ENCODE measurements at regions of chr6 and their contacts with region 1.

Region 1: DNA sequence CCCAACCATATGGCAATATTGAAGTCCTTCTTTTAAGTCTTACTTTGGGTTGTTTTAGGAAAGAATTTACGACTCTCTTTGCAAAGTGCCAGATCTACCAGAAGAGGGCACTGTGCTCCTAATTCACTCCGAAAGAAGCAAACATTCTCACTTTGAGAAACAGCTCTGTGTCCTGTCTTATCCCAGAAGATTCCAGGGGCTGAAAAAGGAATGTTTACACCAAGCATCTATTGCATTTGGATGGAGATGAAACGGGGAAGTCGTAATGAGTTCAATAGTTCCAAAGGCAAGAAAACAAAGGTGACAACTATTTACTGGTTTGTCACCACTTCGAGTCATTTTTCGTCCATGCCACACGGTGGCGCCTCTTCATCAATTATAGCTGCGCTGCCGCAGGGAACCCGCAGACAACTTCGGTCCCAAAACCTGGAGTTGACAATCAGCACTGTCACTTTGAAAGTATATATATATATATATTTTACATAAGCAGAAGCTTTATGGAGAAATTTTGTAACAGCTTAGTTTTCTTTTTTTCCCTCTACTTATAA is 121.6 kb downstream of the MOXD1 start:
- DNase-seq: peak; percentile 65
- ATAC-seq: peak; percentile 93
- H3K4me3 Mint-ChIP-seq: peak overlapping the region; percentile 86
- H3K27ac Mint-ChIP-seq: peak overlapping the region; percentile 19
- H3K4me1 Mint-ChIP-seq: no peaks in the 10 kb centered on the region
- H3K27me3 Mint-ChIP-seq: peaks cover 7% of the 10 kb centered on the region
- CTCF ChIP-seq: peak; percentile 100

Region 2: DNA sequence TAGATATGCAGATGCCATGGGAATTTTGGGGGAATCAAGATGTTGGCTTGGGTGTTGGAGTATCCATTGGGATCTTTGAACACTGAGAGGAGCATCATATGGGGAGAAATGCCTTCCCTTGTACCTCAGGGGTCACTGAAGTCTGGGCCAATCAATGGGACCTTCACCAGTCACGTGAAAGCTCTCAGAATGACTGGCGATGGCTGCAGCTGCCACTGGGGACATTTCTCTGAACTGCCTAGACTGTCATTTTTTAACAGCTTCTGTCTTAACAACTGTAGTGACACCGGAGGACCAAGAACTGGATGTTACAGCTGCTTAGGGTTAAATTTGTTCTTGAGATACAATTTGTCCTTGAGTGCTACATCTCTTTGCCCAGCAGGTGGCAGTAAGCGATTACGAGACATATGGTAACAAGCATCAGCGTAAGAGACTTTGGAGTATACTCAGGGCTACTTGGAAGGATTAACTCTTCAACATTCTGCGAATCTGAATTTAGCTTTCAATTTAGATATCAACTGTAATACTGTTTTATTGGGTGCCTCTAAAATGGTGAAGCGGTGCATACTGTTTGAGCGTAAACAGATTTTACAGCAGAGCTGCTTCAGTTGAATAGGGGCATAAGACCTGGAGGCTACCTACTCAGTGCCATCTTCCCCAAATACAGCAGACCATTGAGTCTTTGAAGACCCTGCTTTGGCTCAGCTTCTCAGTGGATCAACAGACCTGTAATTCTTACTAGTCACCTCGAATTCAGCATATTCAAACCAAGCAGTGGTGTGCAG is 364.5 kb before region 1 on chr6:
- CTCF ChIA-PET with region 1: interaction called, 11 read pairs
- POLR2A ChIA-PET with region 1: no interaction called
- intact Hi-C with region 1: loop called (anchors 5 kb)
- DNase-seq: no peak
- ATAC-seq: peak; percentile 75
- H3K4me3 Mint-ChIP-seq: no peak overlapping the region
- H3K27ac Mint-ChIP-seq: no peak overlapping the region
- H3K4me1 Mint-ChIP-seq: peaks cover 26% of the 10 kb centered on the region
- H3K27me3 Mint-ChIP-seq: peaks cover 30% of the 10 kb centered on the region
- CTCF ChIP-seq: peak; percentile 29

Region 3: DNA sequence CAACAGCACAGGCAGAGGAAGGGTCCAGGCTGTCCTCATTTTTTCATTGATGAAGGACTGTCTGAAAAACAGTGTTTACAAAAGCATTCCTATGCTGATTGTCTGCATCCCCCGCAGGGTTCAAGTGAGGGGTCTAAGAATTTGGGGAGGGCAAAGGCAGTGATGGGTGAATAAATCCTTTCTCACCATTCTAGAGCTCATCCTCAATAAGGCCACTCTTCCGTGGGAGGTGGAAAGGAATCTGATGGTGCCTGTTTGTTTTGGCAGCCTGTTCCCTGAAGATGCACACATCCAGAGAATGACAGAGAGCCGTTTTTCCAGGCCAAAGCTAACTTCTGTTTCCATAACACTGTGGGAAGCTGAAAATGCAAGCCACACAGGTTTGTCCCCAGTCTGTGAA is 42.9 kb before region 1 on chr6:
- CTCF ChIA-PET with region 1: no interaction called
- POLR2A ChIA-PET with region 1: no interaction called
- intact Hi-C with region 1: no loop called
- DNase-seq: no peak
- ATAC-seq: no peak
- H3K4me3 Mint-ChIP-seq: no peak overlapping the region
- H3K27ac Mint-ChIP-seq: no peak overlapping the region
- H3K4me1 Mint-ChIP-seq: peaks cover 7% of the 10 kb centered on the region
- H3K27me3 Mint-ChIP-seq: peaks cover 10% of the 10 kb centered on the region
- CTCF ChIP-seq: no peak

Region 4: GRCh38 chr6:132300323-132300949 is 20.8 kb after region 1 on chr6:
- CTCF ChIA-PET with region 1: interaction called, 553 read pairs
- POLR2A ChIA-PET with region 1: interaction called, 12 read pairs
- intact Hi-C with region 1: loop called (anchors 1 kb)
- DNase-seq: no peak
- ATAC-seq: peak; percentile 98
- H3K4me3 Mint-ChIP-seq: no peak overlapping the region
- H3K27ac Mint-ChIP-seq: no peak overlapping the region
- H3K4me1 Mint-ChIP-seq: no peaks in the 10 kb centered on the region
- H3K27me3 Mint-ChIP-seq: no peaks in the 10 kb centered on the region
- CTCF ChIP-seq: peak; percentile 67

Region 5: DNA sequence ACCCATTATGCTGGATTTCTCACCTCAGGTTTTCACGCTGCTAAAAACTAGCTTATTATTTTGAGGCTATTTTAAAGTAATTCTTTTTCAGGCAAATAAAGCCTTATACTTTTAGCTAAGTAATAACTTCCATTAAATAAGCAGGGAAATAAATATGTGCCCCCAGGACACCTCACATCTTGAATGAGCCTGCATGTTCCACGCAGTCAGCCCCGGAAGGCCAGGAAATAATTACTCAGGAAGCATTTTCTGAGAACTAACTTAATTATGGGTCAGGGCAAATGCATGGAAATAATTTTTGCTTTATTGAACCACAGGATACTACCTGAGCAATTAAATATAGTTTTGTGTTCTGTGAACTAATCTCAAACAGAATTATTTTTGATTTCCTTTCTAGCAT is 192.1 kb after region 1 on chr6:
- CTCF ChIA-PET with region 1: interaction called, 18 read pairs
- POLR2A ChIA-PET with region 1: interaction called, 3 read pairs
- intact Hi-C with region 1: no loop called
- DNase-seq: no peak
- ATAC-seq: no peak
- H3K4me3 Mint-ChIP-seq: no peak overlapping the region
- H3K27ac Mint-ChIP-seq: no peak overlapping the region
- H3K4me1 Mint-ChIP-seq: peaks cover 11% of the 10 kb centered on the region
- H3K27me3 Mint-ChIP-seq: no peaks in the 10 kb centered on the region
- CTCF ChIP-seq: no peak

Region 6: DNA sequence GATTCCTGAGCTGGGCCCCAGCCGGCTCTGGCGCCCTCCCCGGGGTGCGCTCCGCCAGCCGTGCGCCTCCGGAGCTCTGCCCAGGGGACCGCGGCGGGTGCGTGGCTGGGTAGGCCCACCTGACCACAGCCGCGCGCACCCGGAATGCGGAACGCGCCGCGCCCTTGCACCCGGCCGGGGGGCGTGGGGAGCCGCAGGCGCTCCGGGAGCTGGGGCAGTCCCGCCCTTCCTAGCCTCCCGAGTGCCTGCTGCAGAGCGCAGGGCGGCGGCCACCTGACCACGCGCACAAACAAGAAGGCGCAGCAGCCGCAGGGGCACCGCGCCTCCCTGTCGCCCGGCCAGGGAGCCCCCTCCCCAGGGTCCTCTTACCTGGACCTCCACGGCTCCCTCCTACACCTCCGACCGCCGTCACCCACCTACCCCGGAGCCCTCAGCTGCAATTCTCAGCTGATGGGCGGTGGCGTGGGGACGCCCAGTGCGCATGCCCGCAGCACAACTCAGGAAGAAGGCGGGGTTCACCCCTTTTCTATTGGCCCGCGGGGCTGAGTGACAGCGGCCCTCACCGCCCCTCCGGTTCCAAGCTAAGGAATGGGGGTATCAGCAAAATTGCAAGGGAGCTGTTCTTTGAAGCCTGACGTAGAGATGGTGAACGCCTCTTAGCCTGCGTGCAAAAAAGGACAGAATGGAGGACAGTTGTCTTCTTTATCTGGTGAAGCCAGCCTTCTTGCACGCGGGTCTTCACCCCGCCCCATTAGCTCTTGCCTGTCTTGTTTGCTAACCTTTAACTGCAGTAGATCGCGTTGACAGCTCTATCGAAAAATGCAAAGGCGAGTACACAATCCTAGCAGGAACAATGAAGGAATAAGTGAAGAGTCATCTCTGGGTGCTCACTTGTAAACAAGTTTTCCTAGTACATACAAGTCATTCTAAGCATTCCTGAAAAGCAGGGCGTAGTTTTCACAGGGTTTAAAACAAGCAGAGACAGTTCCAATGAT is 233.3 kb after region 1 on chr6 and contains the start of gene STX7:
- CTCF ChIA-PET with region 1: interaction called, 11 read pairs
- POLR2A ChIA-PET with region 1: no interaction called
- intact Hi-C with region 1: no loop called
- DNase-seq: peak; percentile 89
- ATAC-seq: peak; percentile 82
- H3K4me3 Mint-ChIP-seq: peak within 1 kb of the TSS; percentile 96
- H3K27ac Mint-ChIP-seq: peak within 1 kb of the TSS; percentile 97
- H3K4me1 Mint-ChIP-seq: peaks cover 68% of the 10 kb centered on the region
- H3K27me3 Mint-ChIP-seq: no peaks in the 10 kb centered on the region
- CTCF ChIP-seq: no peak
- total RNA-seq, gene STX7: 109 and 138 TPM in 2 replicates

Region 7: GRCh38 chr6:133512410-133513016 is 1232.8 kb after region 1 on chr6:
- CTCF ChIA-PET with region 1: no interaction called
- POLR2A ChIA-PET with region 1: no interaction called
- intact Hi-C with region 1: loop called (anchors 5 kb)
- DNase-seq: no peak
- ATAC-seq: no peak
- H3K4me3 Mint-ChIP-seq: no peak overlapping the region
- H3K27ac Mint-ChIP-seq: no peak overlapping the region
- H3K4me1 Mint-ChIP-seq: no peaks in the 10 kb centered on the region
- H3K27me3 Mint-ChIP-seq: peaks cover 10% of the 10 kb centered on the region
- CTCF ChIP-seq: no peak